Activated CD4-positive, alpha-beta T cell treated with anti-CD3 and anti-CD28 coated beads, Interleukin-2, amount 10 ng/mL, durations not matched to agents 24 days and 14 days (primary cell): ENCODE measurements at regions of chr2 and their contacts with region 1.

Region 1: DNA sequence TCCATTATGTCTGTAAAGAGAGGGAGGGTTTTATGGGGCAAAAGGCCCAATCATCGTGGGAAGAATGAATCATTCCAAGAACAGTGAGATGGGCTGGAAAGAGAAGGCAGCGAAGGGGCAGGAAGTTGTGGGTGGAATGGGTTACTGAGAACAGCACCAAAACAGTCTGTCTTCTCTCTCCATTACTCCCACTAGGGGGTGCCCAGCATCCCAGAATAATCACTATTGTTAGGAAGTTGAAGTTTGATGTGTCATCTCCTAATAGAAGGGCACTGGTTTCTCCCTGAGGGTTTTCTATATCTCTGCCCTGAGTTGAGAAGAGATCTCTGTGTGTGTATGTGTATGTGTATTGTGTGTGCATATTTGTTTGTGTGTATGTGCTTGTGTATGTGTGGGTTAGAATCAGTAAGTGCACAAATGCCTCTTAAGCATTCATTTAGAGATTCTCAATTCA is 76.6 kb upstream of the MAP4K3 start:
- DNase-seq: peak; percentile 77
- H3K4me3 Mint-ChIP-seq: peak overlapping the region; percentile 15
- H3K27ac Mint-ChIP-seq: peak overlapping the region; percentile 59
- H3K4me1 Mint-ChIP-seq: peaks cover 40% of the 10 kb centered on the region
- H3K27me3 Mint-ChIP-seq: peaks cover 4% of the 10 kb centered on the region

Region 2: DNA sequence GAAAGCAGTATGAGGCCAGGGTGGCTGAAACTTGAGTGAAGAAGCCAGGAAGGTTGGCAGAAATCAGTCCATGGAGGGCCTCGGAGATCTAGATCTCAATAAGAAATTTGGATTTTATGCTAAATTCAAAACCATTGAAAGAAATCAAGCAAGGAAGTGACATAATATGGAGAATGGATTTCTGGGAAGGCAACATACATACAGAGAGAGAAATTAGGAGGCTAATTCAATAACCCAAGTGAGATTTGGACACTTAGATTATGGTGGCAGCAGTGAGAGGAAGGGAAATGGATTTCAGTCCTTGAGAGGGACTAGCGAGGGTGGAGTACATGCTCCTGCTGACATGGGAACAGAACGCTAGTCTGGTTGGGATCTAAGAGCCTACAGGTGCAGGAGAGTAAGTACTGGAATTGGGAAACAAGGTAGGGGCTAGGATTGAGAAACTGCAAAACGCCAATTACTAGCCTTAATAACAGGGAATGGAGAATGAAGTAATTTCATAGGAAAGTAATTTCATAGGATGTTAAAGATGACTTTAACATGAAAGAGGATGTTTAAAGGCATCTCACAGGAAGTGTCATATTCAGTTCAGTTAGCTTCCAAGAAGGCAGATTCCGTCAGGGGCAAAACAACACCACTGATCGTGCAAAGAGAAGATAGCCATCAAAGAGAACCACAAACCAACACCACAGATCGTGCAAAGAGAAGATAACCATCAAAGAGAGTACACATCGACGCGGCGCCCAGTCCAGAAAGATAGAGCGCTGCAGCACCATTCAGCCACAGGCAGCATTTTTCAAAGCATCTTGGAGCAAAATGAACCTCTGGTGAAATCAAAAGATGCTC is 297.1 kb before region 1 on chr2:
- intact Hi-C with region 1: loop called (anchors 2 kb)
- DNase-seq: peak; percentile 96
- H3K4me3 Mint-ChIP-seq: peak overlapping the region; percentile 62
- H3K27ac Mint-ChIP-seq: peak overlapping the region; percentile 86
- H3K4me1 Mint-ChIP-seq: peaks cover 61% of the 10 kb centered on the region
- H3K27me3 Mint-ChIP-seq: no peaks in the 10 kb centered on the region

Region 3: DNA sequence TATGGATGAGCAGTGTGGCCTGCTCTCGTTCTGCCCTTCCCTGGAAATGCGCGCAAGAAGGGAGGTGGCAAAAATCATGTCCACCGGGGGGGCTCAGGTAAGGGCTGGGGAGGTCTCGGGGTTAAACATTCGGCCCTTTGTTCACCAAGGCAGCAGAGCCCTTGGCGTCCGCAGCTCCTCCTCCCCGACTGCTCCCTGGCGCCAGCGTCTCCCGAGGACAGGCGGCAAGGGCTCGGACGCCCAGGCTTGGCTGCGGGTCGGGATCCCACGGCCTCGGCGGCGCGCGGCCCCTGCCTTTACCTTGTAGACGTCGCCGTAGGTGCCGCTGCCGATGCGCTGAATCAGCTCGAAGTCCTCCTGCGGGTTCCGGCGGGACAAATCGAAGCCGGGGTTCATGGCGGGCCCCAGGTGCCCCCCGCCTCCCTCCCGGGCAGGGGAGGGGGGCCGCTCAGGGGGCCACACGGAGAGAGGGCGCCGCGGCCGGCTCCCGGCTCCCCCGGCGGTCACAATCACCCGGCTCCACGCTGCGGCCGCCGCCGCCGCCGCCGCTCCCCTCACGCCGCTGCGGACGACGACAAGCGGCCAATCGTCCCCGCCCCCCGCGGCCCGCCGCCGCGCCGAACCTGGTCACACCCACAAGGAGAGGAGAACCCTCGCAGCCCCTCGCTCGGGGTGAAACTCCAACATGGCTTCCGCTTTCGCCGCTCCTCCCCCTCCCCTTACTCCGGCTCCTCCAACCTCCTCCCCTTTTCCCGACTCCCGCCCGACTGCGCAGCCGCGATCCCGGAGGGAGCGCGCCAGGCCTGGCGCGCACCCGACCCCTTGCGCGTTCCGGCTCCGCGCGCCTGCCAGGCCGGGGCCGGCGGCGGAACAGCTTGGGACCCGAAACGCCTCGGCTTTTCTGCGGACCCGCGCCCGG is 76.8 kb before region 1 on chr2 and contains the start of gene MAP4K3:
- intact Hi-C with region 1: loop called (anchors 1 kb)
- DNase-seq: peak; percentile 93
- H3K4me3 Mint-ChIP-seq: peak within 1 kb of the TSS; percentile 91
- H3K27ac Mint-ChIP-seq: peak within 1 kb of the TSS; percentile 90
- H3K4me1 Mint-ChIP-seq: peaks cover 44% of the 10 kb centered on the region
- H3K27me3 Mint-ChIP-seq: no peaks in the 10 kb centered on the region
- total RNA-seq, gene MAP4K3: 12.9 and 16.6 TPM in 2 replicates

Region 4: DNA sequence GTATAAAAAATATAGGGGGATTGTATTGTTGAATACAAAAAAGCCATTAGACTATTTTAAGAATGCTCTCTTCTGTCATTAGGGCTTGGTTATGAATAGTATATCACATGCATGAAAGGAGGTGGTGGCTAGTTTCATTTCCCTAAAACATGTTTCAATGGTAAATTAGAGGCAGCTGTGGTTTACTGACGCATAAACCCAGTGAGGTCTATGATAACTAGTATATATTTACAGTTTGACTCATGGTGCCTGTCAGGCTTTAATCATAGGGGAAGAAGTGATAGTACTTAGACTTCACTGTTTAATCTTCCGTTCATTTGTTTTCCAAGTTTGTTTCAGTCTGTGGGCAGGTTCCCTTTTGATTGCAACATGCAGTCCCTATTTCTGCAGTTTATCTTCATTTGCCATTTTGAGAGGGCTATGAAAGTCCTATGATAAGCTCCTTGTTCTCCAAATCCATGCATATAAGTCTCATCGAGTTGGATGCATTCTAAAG is 21.5 kb before region 1 on chr2:
- intact Hi-C with region 1: loop called (anchors 1 kb)
- DNase-seq: peak; percentile 80
- H3K4me3 Mint-ChIP-seq: peak overlapping the region; percentile 51
- H3K27ac Mint-ChIP-seq: peak overlapping the region; percentile 73
- H3K4me1 Mint-ChIP-seq: peaks cover 43% of the 10 kb centered on the region
- H3K27me3 Mint-ChIP-seq: peaks cover 13% of the 10 kb centered on the region

Region 5: GRCh38 chr2:39603436-39603835 is 89.8 kb after region 1 on chr2:
- intact Hi-C with region 1: loop called (anchors 5 kb)
- DNase-seq: no peak
- H3K4me3 Mint-ChIP-seq: no peak overlapping the region
- H3K27ac Mint-ChIP-seq: no peak overlapping the region
- H3K4me1 Mint-ChIP-seq: peaks cover 2% of the 10 kb centered on the region
- H3K27me3 Mint-ChIP-seq: peaks cover 7% of the 10 kb centered on the region